Left lung (tissue), 14 donors: ENCODE measurements at regions of chr10 and their contacts with region 1.

Region 1: GRCh38 chr10:11724938-11725776 is 17.0 kb upstream of the ECHDC3 start:
- DNase-seq: peak in 2 of 4 donors; percentile 42 to 58
- ATAC-seq: peak; percentile 91
- H3K4me3 ChIP-seq: no peak overlapping the region
- H3K27ac ChIP-seq: no peak overlapping the region
- H3K4me1 ChIP-seq: no peaks in the 10 kb centered on the region
- H3K27me3 ChIP-seq: no peaks in the 10 kb centered on the region
- CTCF ChIP-seq: peak; percentile 57 to 65

Region 2: DNA sequence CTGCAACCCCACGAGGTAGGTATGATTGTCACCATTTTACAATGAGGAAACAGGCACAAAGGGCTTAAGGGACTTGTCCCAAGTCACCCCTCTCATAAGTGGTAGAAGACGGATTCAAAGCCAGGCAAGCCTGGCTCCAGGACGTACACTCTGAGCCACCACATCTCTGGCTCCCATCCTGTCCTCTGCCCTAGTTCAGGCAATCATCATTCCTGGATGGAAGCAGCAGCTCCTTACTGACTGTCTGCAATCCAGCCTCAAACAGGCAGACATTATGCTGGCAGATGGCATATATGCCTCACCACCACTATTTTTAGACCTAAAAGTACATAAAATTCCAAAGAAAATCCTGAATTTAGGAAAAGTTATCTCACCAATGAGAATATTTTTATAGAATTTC is 214.4 kb before region 1 on chr10:
- intact Hi-C with region 1: loop called (anchors 5 to 10 kb)
- DNase-seq: no peak
- ATAC-seq: no peak
- H3K4me3 ChIP-seq: no peak overlapping the region
- H3K27ac ChIP-seq: no peak overlapping the region
- H3K4me1 ChIP-seq: peaks cover 0 to 4% of the 10 kb centered on the region in 2 donors
- H3K27me3 ChIP-seq: no peaks in the 10 kb centered on the region
- CTCF ChIP-seq: no peak

Region 3: GRCh38 chr10:11913074-11913641 is 188.0 kb after region 1 on chr10:
- intact Hi-C with region 1: no loop called
- DNase-seq: no peak
- ATAC-seq: no peak
- H3K4me3 ChIP-seq: no peak overlapping the region
- H3K27ac ChIP-seq: no peak overlapping the region
- H3K4me1 ChIP-seq: no peaks in the 10 kb centered on the region
- H3K27me3 ChIP-seq: no peaks in the 10 kb centered on the region
- CTCF ChIP-seq: no peak